ENCODE measurements at regions of chr11 and their contacts with region 1.

Region 1: GRCh38 chr11:123110356-123110755 is 48.4 kb upstream of the HSPA8 start:
- DNase-seq: no peak
- H3K4me3 Mint-ChIP-seq: no peak overlapping the region
- H3K27ac Mint-ChIP-seq: no peak overlapping the region
- H3K4me1 Mint-ChIP-seq: no peaks in the 10 kb centered on the region
- H3K27me3 Mint-ChIP-seq: peaks cover 24% of the 10 kb centered on the region

Region 2: DNA sequence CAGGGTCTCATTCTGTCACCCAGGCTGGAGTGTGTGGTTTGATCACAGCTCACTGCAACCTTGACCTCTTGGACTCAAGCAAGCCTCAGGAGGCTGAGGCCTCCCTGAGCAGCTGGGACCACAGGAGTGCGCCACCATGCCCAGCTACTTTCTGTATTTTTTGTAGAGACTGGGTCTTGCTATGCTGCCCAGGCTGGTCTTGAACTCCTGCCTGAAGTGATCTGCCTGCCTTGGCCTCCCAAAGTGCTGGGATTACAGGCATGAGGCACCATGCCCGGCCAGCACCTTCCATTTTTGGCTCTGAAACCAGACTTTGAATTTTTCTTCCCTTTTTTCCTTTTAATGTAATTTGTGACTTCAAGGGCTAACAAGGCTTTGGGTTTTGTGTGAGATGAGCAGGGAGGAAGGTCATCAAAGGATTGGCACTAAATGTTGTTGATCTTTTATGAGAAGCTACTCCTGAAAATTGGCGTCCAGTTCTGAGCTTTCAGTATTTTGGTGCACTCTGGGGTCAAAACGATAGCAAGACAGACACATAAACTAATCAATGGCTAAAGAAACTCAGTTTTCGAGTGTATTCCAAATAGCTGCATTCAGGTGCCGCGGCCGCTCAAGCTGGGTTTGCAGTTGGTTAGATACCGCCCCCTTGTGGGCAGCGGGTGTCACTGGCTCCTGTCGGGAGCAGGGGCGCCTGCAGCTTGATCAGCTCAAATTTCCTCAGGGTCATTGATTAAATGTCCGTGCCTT is 136.6 kb after region 1 on chr11:
- intact Hi-C with region 1: loop called (anchors 1 kb)
- DNase-seq: peak; percentile 71
- H3K4me3 Mint-ChIP-seq: no peak overlapping the region
- H3K27ac Mint-ChIP-seq: no peak overlapping the region
- H3K4me1 Mint-ChIP-seq: peaks cover 13% of the 10 kb centered on the region
- H3K27me3 Mint-ChIP-seq: peaks cover 26% of the 10 kb centered on the region

Region 3: GRCh38 chr11:123261345-123262106 is 151.2 kb after region 1 on chr11:
- intact Hi-C with region 1: loop called (anchors 1 kb)
- DNase-seq: peak; percentile 59
- H3K4me3 Mint-ChIP-seq: no peak overlapping the region
- H3K27ac Mint-ChIP-seq: no peak overlapping the region
- H3K4me1 Mint-ChIP-seq: peaks cover 22% of the 10 kb centered on the region
- H3K27me3 Mint-ChIP-seq: peaks cover 17% of the 10 kb centered on the region

Region 4: GRCh38 chr11:123407130-123407995 is 297.0 kb after region 1 on chr11:
- intact Hi-C with region 1: no loop called
- DNase-seq: peak; percentile 20
- H3K4me3 Mint-ChIP-seq: peak overlapping the region; percentile 77
- H3K27ac Mint-ChIP-seq: peak overlapping the region; percentile 90
- H3K4me1 Mint-ChIP-seq: peaks cover 70% of the 10 kb centered on the region
- H3K27me3 Mint-ChIP-seq: no peaks in the 10 kb centered on the region

Region 5: DNA sequence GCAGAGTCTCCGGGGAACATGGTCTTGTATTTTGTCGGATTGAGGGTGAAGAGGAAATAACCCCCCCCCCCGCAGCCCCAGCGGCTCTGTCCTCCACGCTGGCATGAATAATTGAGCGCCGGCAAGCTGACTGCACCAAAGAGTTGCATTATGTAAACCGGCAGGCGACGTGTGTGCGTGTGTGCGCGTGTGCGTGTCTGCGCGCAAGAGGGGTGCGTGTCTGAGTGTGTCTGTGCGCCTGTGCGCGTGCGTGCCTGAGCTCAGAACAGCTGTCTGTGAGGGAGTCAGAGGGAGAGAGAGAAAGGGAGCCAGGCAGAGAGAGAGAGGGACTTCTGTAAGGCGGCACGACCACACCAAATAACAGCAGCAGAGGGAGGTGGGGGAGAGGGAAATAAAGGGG is 449.6 kb after region 1 on chr11:
- intact Hi-C with region 1: loop called (anchors 10 kb)
- DNase-seq: peak; percentile 24
- H3K4me3 Mint-ChIP-seq: peak overlapping the region; percentile 65
- H3K27ac Mint-ChIP-seq: peak overlapping the region; percentile 57
- H3K4me1 Mint-ChIP-seq: peaks cover 28% of the 10 kb centered on the region
- H3K27me3 Mint-ChIP-seq: no peaks in the 10 kb centered on the region

Region 6: GRCh38 chr11:123580557-123581275 is 470.4 kb after region 1 on chr11:
- intact Hi-C with region 1: loop called (anchors 1 kb)
- DNase-seq: peak; percentile 57
- H3K4me3 Mint-ChIP-seq: no peak overlapping the region
- H3K27ac Mint-ChIP-seq: peak overlapping the region; percentile 29
- H3K4me1 Mint-ChIP-seq: peaks cover 23% of the 10 kb centered on the region
- H3K27me3 Mint-ChIP-seq: no peaks in the 10 kb centered on the region

Region 7: GRCh38 chr11:123707606-123708205 is 597.4 kb after region 1 on chr11:
- intact Hi-C with region 1: loop called (anchors 10 kb)
- DNase-seq: peak; percentile 38
- H3K4me3 Mint-ChIP-seq: no peak overlapping the region
- H3K27ac Mint-ChIP-seq: no peak overlapping the region
- H3K4me1 Mint-ChIP-seq: no peaks in the 10 kb centered on the region
- H3K27me3 Mint-ChIP-seq: peaks cover 20% of the 10 kb centered on the region